Activated B cell treated with CpG ODN at 0.5 μM for 24 hours (primary cell): ENCODE measurements at regions of chr2 and their contacts with region 1.

Region 1: GRCh38 chr2:70553584-70554337 is at the start of gene TGFA:
- DNase-seq: peak; percentile 56
- ATAC-seq: peak; percentile 78
- H3K4me3 Mint-ChIP-seq: peak within 1 kb of the TSS; percentile 84
- H3K27ac Mint-ChIP-seq: no peak within 1 kb of the TSS
- H3K4me1 Mint-ChIP-seq: peaks cover 19% of the 10 kb centered on the region
- H3K27me3 Mint-ChIP-seq: peaks cover 56% of the 10 kb centered on the region
- CTCF ChIP-seq: no peak
- total RNA-seq, gene TGFA: 0.31 and 0.51 TPM in 2 replicates

Region 2: GRCh38 chr2:70340921-70341765 is 212.6 kb before region 1 on chr2:
- CTCF ChIA-PET with region 1: no interaction called
- POLR2A ChIA-PET with region 1: no interaction called
- intact Hi-C with region 1: loop called (anchors 5 kb)
- DNase-seq: no peak
- ATAC-seq: no peak
- H3K4me3 Mint-ChIP-seq: no peak overlapping the region
- H3K27ac Mint-ChIP-seq: no peak overlapping the region
- H3K4me1 Mint-ChIP-seq: no peaks in the 10 kb centered on the region
- H3K27me3 Mint-ChIP-seq: peaks cover 27% of the 10 kb centered on the region
- CTCF ChIP-seq: no peak

Region 3: DNA sequence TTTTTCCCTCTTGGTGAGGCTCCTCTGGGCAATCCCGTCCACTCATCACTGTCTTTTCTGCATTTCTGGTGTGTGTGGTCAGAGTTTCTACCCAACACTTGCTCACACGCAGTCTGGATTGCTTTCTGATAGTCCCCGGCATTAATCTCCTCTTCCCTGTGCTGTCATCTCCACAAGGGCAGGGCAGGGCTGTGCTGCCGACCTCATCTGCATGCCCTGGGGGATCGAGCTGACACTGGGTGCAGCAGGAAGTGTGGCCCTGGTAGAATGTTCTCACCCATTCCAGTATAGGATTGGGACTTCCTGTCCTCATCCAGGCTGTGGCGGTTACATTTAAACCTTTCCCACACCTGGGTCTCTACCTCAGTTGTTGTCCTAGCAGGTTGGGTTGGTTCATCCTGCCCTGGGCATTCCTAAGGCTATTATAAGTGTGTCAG is 171.9 kb before region 1 on chr2:
- CTCF ChIA-PET with region 1: no interaction called
- POLR2A ChIA-PET with region 1: no interaction called
- intact Hi-C with region 1: no loop called
- DNase-seq: no peak
- ATAC-seq: no peak
- H3K4me3 Mint-ChIP-seq: no peak overlapping the region
- H3K27ac Mint-ChIP-seq: no peak overlapping the region
- H3K4me1 Mint-ChIP-seq: no peaks in the 10 kb centered on the region
- H3K27me3 Mint-ChIP-seq: peaks cover 19% of the 10 kb centered on the region
- CTCF ChIP-seq: no peak

Region 4: DNA sequence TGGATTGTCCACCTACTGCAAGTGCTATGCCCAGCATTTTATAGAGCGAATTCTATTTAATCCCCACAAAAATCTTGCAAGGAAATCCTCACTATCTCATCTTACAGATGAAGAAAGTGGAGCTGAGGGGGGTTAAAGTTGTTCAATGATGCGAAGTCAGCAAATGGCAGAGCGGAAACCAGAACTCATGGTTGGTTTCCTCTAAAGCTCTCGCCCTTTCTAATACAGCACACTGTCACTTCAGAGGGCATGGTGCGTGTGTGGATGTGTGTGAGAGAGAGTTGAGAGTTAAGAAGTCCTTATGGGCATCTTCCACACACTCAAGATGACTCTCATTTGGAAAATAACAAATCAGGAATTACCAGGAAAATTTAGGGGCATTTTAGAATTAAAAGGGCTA is 78.5 kb before region 1 on chr2:
- CTCF ChIA-PET with region 1: no interaction called
- POLR2A ChIA-PET with region 1: interaction called, 3 read pairs
- intact Hi-C with region 1: loop called (anchors 5 kb)
- DNase-seq: no peak
- ATAC-seq: peak; percentile 90
- H3K4me3 Mint-ChIP-seq: peak overlapping the region; percentile 62
- H3K27ac Mint-ChIP-seq: no peak overlapping the region
- H3K4me1 Mint-ChIP-seq: peaks cover 61% of the 10 kb centered on the region
- H3K27me3 Mint-ChIP-seq: no peaks in the 10 kb centered on the region
- CTCF ChIP-seq: no peak

Region 5: DNA sequence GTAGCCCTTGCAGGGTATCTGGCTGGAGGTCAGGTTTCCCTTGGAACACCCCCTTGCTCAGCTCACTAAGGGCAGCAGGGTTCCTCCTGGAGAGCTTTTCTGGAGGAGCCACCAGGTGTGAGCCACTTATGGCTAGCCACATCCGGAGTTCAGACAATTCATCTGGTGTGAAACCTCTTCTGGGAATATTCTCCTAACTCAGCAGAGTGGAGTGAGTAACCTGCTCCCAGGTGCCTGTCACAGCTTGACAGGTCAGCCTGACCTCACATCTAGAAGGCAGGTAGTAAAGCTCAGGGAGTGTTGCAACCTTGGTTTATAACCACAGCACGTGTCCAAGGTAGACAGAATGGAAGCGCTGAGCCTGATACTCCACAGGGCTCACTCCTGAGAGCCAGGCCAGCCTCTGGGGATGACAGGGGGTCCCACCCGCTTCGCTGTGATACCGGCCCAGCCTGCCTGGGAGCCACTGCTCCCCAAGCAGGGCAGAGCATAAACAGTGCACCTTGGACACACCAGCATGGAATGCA is 62.5 kb after region 1 on chr2:
- CTCF ChIA-PET with region 1: interaction called, 3 read pairs
- POLR2A ChIA-PET with region 1: no interaction called
- intact Hi-C with region 1: loop called (anchors 2 kb)
- DNase-seq: no peak
- ATAC-seq: no peak
- H3K4me3 Mint-ChIP-seq: no peak overlapping the region
- H3K27ac Mint-ChIP-seq: no peak overlapping the region
- H3K4me1 Mint-ChIP-seq: no peaks in the 10 kb centered on the region
- H3K27me3 Mint-ChIP-seq: peaks cover 8% of the 10 kb centered on the region
- CTCF ChIP-seq: no peak

Region 6: GRCh38 chr2:70647873-70648481 is 94.2 kb after region 1 on chr2:
- CTCF ChIA-PET with region 1: no interaction called
- POLR2A ChIA-PET with region 1: no interaction called
- intact Hi-C with region 1: loop called (anchors 5 kb)
- DNase-seq: peak; percentile 52
- ATAC-seq: peak; percentile 77
- H3K4me3 Mint-ChIP-seq: no peak overlapping the region
- H3K27ac Mint-ChIP-seq: no peak overlapping the region
- H3K4me1 Mint-ChIP-seq: no peaks in the 10 kb centered on the region
- H3K27me3 Mint-ChIP-seq: peaks cover 26% of the 10 kb centered on the region
- CTCF ChIP-seq: peak; percentile 84